ENCODE measurements at regions of chr19 and their contacts with region 1.

Region 1: DNA sequence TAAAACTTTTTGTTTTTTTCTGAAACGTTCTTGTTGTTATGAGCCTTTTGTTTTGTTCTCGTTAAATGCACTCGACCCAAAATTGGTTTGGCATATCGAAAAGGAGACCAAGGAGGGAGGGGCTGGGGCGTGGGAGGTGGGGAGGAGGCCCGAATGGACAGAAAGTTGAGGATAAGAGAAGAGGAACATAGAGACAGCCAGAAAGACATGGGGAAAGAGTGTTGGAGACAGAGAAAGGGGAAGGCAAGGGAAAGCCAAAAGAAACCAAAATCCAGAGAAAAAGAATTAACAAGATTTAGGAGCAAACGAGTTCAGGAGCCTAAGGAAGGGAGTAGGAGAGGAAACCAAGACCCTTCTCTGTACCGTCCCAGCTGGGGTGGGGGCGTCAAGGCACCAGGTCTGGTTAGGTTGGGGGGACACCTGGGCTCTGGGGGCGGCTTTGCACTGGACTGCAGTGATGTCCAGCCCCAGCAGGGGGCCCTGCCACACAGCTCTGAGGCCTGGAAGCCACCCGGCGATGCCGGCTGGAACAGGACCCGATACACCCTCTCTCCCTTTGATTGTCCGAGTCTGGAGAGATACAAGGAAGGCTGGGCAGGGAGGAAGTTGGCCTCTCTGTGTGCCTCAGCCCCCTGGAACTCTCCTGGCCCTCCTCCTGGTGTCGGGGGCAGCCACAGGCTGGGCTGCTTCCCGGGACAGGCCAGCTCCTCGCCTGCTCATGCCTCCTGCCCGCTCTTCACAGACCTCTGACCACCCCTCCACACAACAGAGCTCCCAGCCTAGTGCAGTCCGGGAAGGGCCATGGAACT is 11.6 kb upstream of the ASF1B start:
- DNase-seq: peak; percentile 31 to 77 (median 59)
- ATAC-seq: peak; percentile 60
- H3K4me3 ChIP-seq: no peak overlapping the region
- H3K4me3 Mint-ChIP-seq: peak overlapping the region; percentile 82
- H3K27ac ChIP-seq: peak overlapping the region; percentile 87 to 94
- H3K27ac Mint-ChIP-seq: peak overlapping the region; percentile 100
- H3K4me1 ChIP-seq: peaks cover 30% of the 10 kb centered on the region
- H3K4me1 Mint-ChIP-seq: peaks cover 38% of the 10 kb centered on the region
- H3K27me3 ChIP-seq: no peaks in the 10 kb centered on the region
- H3K27me3 Mint-ChIP-seq: no peaks in the 10 kb centered on the region
- CTCF ChIP-seq: peak; percentile 30

Region 2: GRCh38 chr19:14167576-14168138 is 19.7 kb after region 1 on chr19:
- CTCF ChIA-PET with region 1: interaction called, 3 read pairs
- POLR2A ChIA-PET with region 1: no interaction called
- intact Hi-C with region 1: loop called in 1 of 2 experiments (anchors 1 kb)
- DNase-seq: peak in 7 of 9 experiments; percentile 19 to 71 (median 44)
- ATAC-seq: peak; percentile 72
- H3K4me3 ChIP-seq: peak overlapping the region; percentile 40 to 44
- H3K4me3 Mint-ChIP-seq: peak overlapping the region; percentile 86
- H3K27ac ChIP-seq: peak overlapping the region; percentile 46 to 53
- H3K27ac Mint-ChIP-seq: peak overlapping the region; percentile 84
- H3K4me1 ChIP-seq: peaks cover 31% of the 10 kb centered on the region
- H3K4me1 Mint-ChIP-seq: peaks cover 23% of the 10 kb centered on the region
- H3K27me3 ChIP-seq: no peaks in the 10 kb centered on the region
- H3K27me3 Mint-ChIP-seq: no peaks in the 10 kb centered on the region
- CTCF ChIP-seq: no peak